ENCODE measurements at regions of chr2 and their contacts with region 1.

Region 1: GRCh38 chr2:223837287-223838061 is at the start of gene AP1S3:
- DNase-seq: peak; percentile 30 to 75 (median 58)
- ATAC-seq: peak; percentile 88
- H3K4me3 ChIP-seq: peak within 1 kb of the TSS; percentile 69
- H3K4me3 Mint-ChIP-seq: peak within 1 kb of the TSS; percentile 87 to 97 (median 94)
- H3K27ac ChIP-seq: peak within 1 kb of the TSS; percentile 60
- H3K27ac Mint-ChIP-seq: peak within 1 kb of the TSS; percentile 36 to 84 (median 76)
- H3K4me1 ChIP-seq: no peaks in the 10 kb centered on the region
- H3K4me1 Mint-ChIP-seq: peaks cover 0 to 20% (median 12%) of the 10 kb centered on the region in 7 donors
- H3K27me3 ChIP-seq: no peaks in the 10 kb centered on the region
- H3K27me3 Mint-ChIP-seq: no peaks in the 10 kb centered on the region
- total RNA-seq, gene AP1S3: 0.54 to 8.2 (median 1.6) TPM

Region 2: GRCh38 chr2:223779877-223780276 is 57.6 kb before region 1 on chr2:
- CTCF ChIA-PET with region 1: no interaction called
- POLR2A ChIA-PET with region 1: no interaction called
- intact Hi-C with region 1: loop called in 1 of 2 experiments (anchors 2 kb)
- DNase-seq: peak in 8 of 9 donors; percentile 8 to 36 (median 24)
- ATAC-seq: peak; percentile 80
- H3K4me3 ChIP-seq: no peak overlapping the region
- H3K4me3 Mint-ChIP-seq: no peak overlapping the region
- H3K27ac ChIP-seq: no peak overlapping the region
- H3K27ac Mint-ChIP-seq: no peak overlapping the region
- H3K4me1 ChIP-seq: no peaks in the 10 kb centered on the region
- H3K4me1 Mint-ChIP-seq: peaks cover 0 to 2% (median 0%) of the 10 kb centered on the region in 7 donors
- H3K27me3 ChIP-seq: no peaks in the 10 kb centered on the region
- H3K27me3 Mint-ChIP-seq: no peaks in the 10 kb centered on the region

Region 3: DNA sequence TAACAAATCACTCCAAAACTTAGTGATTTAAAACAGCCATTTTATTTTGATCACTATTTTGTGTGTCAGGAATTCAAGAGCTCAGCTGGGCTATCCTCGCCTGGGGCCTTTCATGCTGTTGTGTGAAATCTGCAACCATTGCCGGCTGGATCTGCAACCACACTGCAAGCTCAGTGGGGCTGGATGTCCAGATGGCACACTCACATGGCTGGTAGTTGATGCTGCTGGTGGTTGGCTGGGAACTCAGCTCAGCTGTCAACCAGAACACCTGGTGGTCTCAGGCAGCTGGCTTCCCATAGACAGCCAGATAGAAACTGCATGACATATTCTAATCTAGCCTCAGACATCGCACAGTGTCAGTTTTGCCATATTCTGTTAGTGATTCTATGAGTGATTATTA is 30.5 kb after region 1 on chr2:
- CTCF ChIA-PET with region 1: no interaction called
- POLR2A ChIA-PET with region 1: no interaction called
- intact Hi-C with region 1: loop called (anchors 2 kb)
- DNase-seq: no peak
- ATAC-seq: no peak
- H3K4me3 ChIP-seq: no peak overlapping the region
- H3K4me3 Mint-ChIP-seq: no peak overlapping the region
- H3K27ac ChIP-seq: no peak overlapping the region
- H3K27ac Mint-ChIP-seq: no peak overlapping the region
- H3K4me1 ChIP-seq: peaks cover 22% of the 10 kb centered on the region in 2 donors
- H3K4me1 Mint-ChIP-seq: peaks cover 19 to 34% (median 24%) of the 10 kb centered on the region in 7 donors
- H3K27me3 ChIP-seq: no peaks in the 10 kb centered on the region
- H3K27me3 Mint-ChIP-seq: no peaks in the 10 kb centered on the region